ENCODE measurements at regions of chr14 and their contacts with region 1.

Region 1: GRCh38 chr14:68248481-68249255 is 429.1 kb downstream of the RAD51B start:
- DNase-seq: peak in 6 of 35 experiments; percentile 4 to 77 (median 20)
- ATAC-seq: peak; percentile 64 to 83 (median 74)
- H3K4me3 ChIP-seq: no peak overlapping the region
- H3K4me3 Mint-ChIP-seq: no peak overlapping the region
- H3K27ac ChIP-seq: no peak overlapping the region
- H3K27ac Mint-ChIP-seq: peak overlapping the region; percentile 61 to 73
- H3K4me1 ChIP-seq: peaks cover 6 to 30% of the 10 kb centered on the region in 2 experiments
- H3K4me1 Mint-ChIP-seq: peaks cover 36 to 48% (median 41%) of the 10 kb centered on the region in 3 donors
- H3K27me3 ChIP-seq: no peaks in the 10 kb centered on the region
- H3K27me3 Mint-ChIP-seq: no peaks in the 10 kb centered on the region

Region 2: GRCh38 chr14:68261092-68261842 is 12.6 kb after region 1 on chr14:
- CTCF ChIA-PET with region 1: interaction called in 1 of 2 experiments, 13 read pairs
- POLR2A ChIA-PET with region 1: no interaction called
- DNase-seq: no peak
- ATAC-seq: peak; percentile 48 to 80 (median 67)
- H3K4me3 ChIP-seq: no peak overlapping the region
- H3K4me3 Mint-ChIP-seq: peak overlapping the region; percentile 2 to 63 (median 39)
- H3K27ac ChIP-seq: peak overlapping the region; percentile 59
- H3K27ac Mint-ChIP-seq: peak overlapping the region; percentile 81 to 91
- H3K4me1 ChIP-seq: peaks cover 33 to 59% of the 10 kb centered on the region in 2 experiments
- H3K4me1 Mint-ChIP-seq: peaks cover 51 to 75% (median 65%) of the 10 kb centered on the region in 3 donors
- H3K27me3 ChIP-seq: no peaks in the 10 kb centered on the region
- H3K27me3 Mint-ChIP-seq: no peaks in the 10 kb centered on the region

Region 3: DNA sequence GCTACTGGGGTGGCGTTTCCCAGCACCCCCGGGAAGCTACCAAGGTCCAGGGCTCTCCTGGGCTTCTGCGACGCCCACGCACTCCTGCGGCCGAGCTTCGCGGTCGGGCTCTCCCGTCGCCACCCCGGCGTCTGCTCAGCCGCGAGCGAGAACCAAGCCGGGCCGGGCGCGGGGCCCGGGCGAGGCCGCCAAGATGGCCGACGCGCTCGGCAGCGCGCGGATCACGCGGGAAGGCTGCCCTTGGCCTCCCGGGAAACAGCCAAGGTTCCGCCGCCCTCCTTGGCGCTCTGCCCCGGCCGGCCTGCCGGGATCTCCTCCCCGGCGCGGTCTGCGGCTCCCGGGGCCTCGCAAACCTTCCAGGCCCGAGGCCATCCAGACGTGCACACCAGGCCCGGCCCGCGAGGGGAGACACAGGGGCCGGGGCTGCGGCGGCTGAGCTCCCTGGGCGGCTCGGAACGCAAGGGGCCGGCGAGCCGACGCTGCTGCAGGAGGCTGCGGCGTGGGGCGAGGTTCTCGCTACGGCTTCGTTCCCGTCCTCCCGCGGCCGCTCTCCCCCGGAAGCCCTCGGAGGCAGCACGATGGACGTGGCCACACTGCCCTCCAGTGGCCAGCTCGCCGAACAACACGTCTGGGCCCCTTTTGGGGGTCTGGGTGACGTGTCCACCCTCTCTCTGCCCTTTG is 567.7 kb after region 1 on chr14:
- CTCF ChIA-PET with region 1: interaction called, 12 to 81 read pairs
- POLR2A ChIA-PET with region 1: no interaction called
- DNase-seq: peak; percentile 63 to 93 (median 83)
- ATAC-seq: peak; percentile 76 to 82 (median 81)
- H3K4me3 ChIP-seq: peak overlapping the region; percentile 62 to 73
- H3K4me3 Mint-ChIP-seq: peak overlapping the region; percentile 79 to 89 (median 82)
- H3K27ac ChIP-seq: peak overlapping the region; percentile 97
- H3K27ac Mint-ChIP-seq: peak overlapping the region; percentile 97 to 98
- H3K4me1 ChIP-seq: peaks cover 32 to 82% of the 10 kb centered on the region in 2 experiments
- H3K4me1 Mint-ChIP-seq: peaks cover 69 to 86% (median 71%) of the 10 kb centered on the region in 3 donors
- H3K27me3 ChIP-seq: no peaks in the 10 kb centered on the region
- H3K27me3 Mint-ChIP-seq: no peaks in the 10 kb centered on the region